ENCODE measurements at regions of chr3 and their contacts with region 1.

Region 1: GRCh38 chr3:110995461-110996231 is 76.0 kb upstream of the NECTIN3 start:
- DNase-seq: no peak
- H3K4me3 ChIP-seq: no peak overlapping the region
- H3K27ac ChIP-seq: no peak overlapping the region
- H3K4me1 ChIP-seq: no peaks in the 10 kb centered on the region
- H3K27me3 ChIP-seq: no peaks in the 10 kb centered on the region
- CTCF ChIP-seq: no peak
- POLR2A ChIP-seq: no peak

Region 2: GRCh38 chr3:110711851-110712516 is 283.7 kb before region 1 on chr3:
- intact Hi-C with region 1: no loop called
- DNase-seq: no peak
- H3K4me3 ChIP-seq: no peak overlapping the region
- H3K27ac ChIP-seq: no peak overlapping the region
- H3K4me1 ChIP-seq: no peaks in the 10 kb centered on the region
- H3K27me3 ChIP-seq: no peaks in the 10 kb centered on the region
- CTCF ChIP-seq: no peak
- POLR2A ChIP-seq: no peak

Region 3: GRCh38 chr3:111134334-111134733 is 138.7 kb after region 1 on chr3:
- intact Hi-C with region 1: loop called (anchors 5 kb)
- DNase-seq: no peak
- H3K4me3 ChIP-seq: no peak overlapping the region
- H3K27ac ChIP-seq: no peak overlapping the region
- H3K4me1 ChIP-seq: no peaks in the 10 kb centered on the region
- H3K27me3 ChIP-seq: no peaks in the 10 kb centered on the region
- CTCF ChIP-seq: no peak
- POLR2A ChIP-seq: no peak